Activated CD4-positive, alpha-beta T cell treated with anti-CD3 and anti-CD28 coated beads, Interleukin-2, amount 10 ng/mL, durations not matched to agents 24 days and 14 days (primary cell): ENCODE measurements at regions of chr13 and their contacts with region 1.

Region 1: DNA sequence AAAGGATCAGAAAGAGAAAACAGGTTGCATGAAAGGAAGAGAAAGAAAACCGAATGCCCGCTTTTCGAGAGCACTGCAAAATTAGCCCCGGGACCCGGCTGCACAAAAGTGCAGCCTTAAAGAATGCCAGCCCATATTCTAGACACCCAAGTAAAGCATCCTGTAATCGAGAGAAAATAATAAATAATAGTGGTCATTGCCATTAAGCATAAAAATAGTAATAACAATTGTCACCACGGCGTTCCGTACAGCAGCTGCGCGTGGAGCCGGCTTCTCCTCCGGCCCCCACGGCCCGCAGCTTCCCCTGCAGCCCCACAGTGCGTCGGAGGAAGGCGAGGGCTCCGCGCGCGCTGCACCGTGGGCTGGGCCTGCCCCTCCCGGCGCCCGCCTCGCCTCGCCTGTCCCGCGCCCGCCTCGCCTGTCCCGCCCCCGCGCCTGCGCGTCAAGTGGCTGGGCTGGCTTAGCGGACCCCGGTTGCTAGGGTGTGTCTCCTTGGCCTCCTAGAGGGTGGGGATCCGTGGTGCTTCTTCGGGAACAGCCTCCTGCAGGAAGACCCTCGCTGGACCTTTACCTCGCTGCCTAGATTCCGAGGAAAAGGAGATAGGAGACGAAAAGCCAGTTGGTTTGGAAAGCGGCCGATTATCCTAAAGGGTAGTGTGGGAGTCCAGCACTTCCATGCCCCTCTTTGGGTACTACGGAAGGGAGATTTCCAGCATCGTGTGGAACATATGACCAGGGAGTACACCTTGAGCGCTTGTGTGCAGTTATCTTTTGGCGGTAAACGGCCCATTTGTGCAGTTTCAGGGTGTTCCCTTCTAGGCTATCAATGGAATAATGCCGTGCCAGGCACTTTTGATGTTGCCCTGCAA is at the start of gene LRRC63:
- DNase-seq: peak; percentile 97
- H3K4me3 Mint-ChIP-seq: peak within 1 kb of the TSS; percentile 86
- H3K27ac Mint-ChIP-seq: peak within 1 kb of the TSS; percentile 92
- H3K4me1 Mint-ChIP-seq: peaks cover 25% of the 10 kb centered on the region
- H3K27me3 Mint-ChIP-seq: peaks cover 2% of the 10 kb centered on the region
- total RNA-seq, gene LRRC63: 0.26 and 0.40 TPM in 2 replicates

Region 2: DNA sequence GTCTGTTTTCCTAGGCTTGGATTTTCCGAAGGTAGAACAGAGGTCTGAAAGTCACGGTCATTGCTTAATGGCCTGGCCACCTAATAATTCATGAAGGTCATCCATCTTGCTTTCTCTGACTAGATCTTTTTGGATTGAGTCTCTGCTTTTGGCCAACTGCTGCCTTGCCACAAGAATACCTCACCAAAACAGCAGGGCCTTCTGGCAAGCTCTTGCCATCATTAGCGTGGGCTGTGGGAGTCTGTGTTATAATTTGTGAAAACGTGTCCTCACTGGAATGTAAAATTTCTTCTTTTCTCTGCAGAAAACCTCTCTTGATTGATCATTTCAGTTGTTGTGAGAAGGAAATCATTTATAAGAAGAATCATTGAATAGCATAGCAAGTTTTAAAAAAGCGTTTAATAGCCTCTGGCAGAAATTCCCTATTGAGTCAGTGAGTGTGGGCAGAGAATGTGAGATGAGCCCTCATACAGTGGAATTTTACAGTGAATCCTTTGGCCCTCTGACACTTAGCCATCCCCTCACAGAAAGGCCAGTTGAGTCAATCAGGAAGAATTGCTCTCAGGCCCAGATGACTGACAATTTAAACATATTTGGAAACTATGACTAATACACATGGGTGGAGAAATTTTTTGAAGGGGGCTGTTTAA is 553.0 kb before region 1 on chr13:
- intact Hi-C with region 1: no loop called
- DNase-seq: peak; percentile 17
- H3K4me3 Mint-ChIP-seq: no peak overlapping the region
- H3K27ac Mint-ChIP-seq: no peak overlapping the region
- H3K4me1 Mint-ChIP-seq: peaks cover 2% of the 10 kb centered on the region
- H3K27me3 Mint-ChIP-seq: no peaks in the 10 kb centered on the region

Region 3: DNA sequence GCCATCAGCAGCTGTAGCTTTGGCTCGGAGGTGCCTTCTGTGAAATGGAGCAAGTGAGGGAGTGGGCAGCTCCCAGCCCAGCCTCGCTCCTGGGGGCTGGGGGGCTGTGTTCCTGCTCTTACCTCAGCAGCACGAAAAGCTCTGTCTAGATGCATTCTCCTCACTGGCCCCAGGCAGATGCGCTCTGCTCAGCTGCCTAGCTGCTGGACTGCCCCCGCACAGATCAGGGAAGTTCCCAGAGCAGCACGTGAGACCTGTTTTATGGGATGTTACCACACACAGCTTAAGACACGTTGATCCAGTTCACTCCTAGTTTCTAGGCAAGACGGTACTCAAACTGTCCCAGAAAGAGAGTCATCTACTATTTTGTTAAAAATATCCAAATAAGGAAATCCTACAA is 43.4 kb before region 1 on chr13:
- intact Hi-C with region 1: loop called (anchors 5 kb)
- DNase-seq: peak; percentile 76
- H3K4me3 Mint-ChIP-seq: peak overlapping the region; percentile 82
- H3K27ac Mint-ChIP-seq: peak overlapping the region; percentile 92
- H3K4me1 Mint-ChIP-seq: peaks cover 83% of the 10 kb centered on the region
- H3K27me3 Mint-ChIP-seq: no peaks in the 10 kb centered on the region

Region 4: DNA sequence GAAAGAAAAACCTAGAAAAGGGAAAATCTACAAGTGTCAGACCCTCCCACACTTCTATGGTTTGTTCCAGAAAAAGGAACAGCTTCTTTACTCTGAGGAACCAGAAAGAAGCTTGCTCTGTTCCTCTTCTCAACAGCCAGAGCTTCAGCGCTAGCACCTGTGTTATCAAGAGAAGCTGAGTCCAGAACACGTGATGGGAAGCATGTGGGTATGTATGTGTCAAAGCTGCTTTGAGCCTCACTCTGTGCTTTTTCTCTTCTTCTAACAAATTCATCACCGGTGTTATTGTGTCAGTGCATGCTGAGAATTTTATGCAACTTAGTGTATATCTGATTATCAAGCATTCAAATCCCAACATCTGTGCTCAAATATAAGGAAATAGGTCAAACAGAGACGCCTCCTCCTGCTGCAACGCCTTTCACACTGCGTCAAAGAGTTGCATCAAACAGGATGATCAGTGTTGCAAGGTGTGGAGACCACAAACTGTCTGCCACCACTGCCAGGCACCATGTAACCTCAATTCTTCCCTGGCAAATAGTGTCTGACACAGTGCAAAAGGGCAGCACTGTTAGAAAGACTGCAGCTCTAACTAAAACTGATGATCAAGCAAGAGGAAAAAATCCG is 83.9 kb after region 1 on chr13:
- intact Hi-C with region 1: loop called (anchors 5 kb)
- DNase-seq: peak; percentile 83
- H3K4me3 Mint-ChIP-seq: peak overlapping the region; percentile 71
- H3K27ac Mint-ChIP-seq: peak overlapping the region; percentile 90
- H3K4me1 Mint-ChIP-seq: peaks cover 36% of the 10 kb centered on the region
- H3K27me3 Mint-ChIP-seq: no peaks in the 10 kb centered on the region